Left ventricle myocardium superior (tissue), 1 donor: ENCODE measurements at regions of chr1 and their contacts with region 1.

Region 1: DNA sequence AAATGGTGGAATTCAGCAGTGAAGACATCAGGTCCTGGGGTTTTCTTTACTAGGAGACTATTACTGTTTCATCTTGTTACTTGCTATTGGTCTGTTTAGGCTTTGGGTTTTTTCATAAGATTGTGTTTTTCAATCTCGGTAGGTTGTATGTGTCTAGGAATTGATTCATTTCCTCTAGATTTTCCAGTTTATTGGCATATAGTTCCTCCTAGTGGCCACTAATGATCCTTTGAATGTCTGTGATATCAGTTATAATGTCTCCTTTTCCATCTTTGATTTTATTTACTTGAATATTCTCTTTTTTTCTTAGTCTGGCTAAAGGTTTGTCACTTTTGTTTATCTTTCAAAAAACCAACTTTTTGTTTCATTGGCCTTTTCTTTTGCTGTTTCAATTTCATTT is 233.0 kb downstream of the RWDD3 start:
- DNase-seq: no peak
- ATAC-seq: no peak

Region 2: DNA sequence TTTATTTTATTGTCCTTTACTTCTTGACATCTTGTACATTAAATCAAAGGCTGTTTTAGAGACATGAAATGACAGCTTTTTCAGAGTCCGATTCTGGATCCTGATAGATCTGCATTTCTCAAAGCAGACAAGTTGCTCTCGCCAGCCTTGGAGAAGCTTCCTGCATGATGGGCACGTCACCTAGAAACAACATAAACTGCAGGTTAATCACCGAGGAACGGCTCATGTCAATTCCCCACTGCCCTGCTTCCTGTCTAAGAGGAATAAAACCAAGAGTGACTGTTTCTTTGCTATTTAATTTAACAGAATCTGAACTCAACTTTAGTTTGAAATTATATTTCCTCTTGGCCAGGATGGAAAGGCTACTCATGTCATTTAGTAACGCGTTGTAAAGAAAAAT is 156.0 kb before region 1 on chr1:
- intact Hi-C with region 1: loop called (anchors 5 kb)
- DNase-seq: no peak
- ATAC-seq: no peak